AG04450 (cell line): ENCODE measurements at regions of chr2 and their contacts with region 1.

Region 1: GRCh38 chr2:98412751-98413458 is 31.8 kb upstream of the INPP4A start:
- DNase-seq: peak; percentile 8
- H3K4me3 ChIP-seq: no peak overlapping the region
- H3K27ac ChIP-seq: no peak overlapping the region
- H3K27me3 ChIP-seq: peaks cover 3% of the 10 kb centered on the region
- CTCF ChIP-seq: peak; percentile 83

Region 2: DNA sequence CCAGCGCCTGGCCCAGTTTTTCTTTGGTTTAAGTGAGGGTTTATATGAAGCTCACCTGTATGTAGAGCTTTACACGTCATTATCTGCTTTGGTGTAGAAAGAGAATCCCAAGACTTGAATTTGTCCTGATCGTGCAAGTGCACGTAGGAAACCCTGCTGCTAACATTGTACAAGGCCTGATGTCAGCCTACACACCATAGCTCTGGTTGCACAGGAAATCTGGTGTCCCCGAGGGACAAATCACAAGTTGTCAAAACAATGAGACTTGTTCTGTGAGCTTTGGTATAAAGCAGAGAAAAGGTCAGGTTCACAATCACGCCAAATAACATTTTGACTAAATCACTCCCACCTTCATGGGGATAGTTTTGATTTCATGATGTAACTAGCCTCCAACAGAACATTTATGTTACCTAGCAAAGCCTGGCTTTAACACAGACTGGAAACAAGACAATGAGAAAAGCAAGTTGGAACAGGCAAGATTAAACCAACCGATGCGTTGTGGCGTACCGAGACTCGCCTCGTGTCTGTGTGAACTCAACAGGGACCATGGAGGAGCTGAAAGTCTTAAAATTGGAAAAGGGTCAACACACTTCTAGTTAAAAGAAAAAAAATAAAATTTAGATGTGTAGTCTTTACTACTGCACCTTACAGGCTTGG is 658.1 kb before region 1 on chr2:
- CTCF ChIA-PET with region 1: no interaction called
- POLR2A ChIA-PET with region 1: no interaction called
- DNase-seq: no peak
- H3K4me3 ChIP-seq: no peak overlapping the region
- H3K27ac ChIP-seq: no peak overlapping the region
- H3K27me3 ChIP-seq: no peaks in the 10 kb centered on the region
- CTCF ChIP-seq: no peak

Region 3: GRCh38 chr2:97900806-97901205 is 512.1 kb before region 1 on chr2:
- CTCF ChIA-PET with region 1: no interaction called
- POLR2A ChIA-PET with region 1: no interaction called
- DNase-seq: peak; percentile 1
- H3K4me3 ChIP-seq: no peak overlapping the region
- H3K27ac ChIP-seq: no peak overlapping the region
- H3K27me3 ChIP-seq: no peaks in the 10 kb centered on the region
- CTCF ChIP-seq: no peak

Region 4: GRCh38 chr2:98472132-98472650 is 59.3 kb after region 1 on chr2:
- CTCF ChIA-PET with region 1: no interaction called
- POLR2A ChIA-PET with region 1: no interaction called
- DNase-seq: no peak
- H3K4me3 ChIP-seq: no peak overlapping the region
- H3K27ac ChIP-seq: no peak overlapping the region
- H3K27me3 ChIP-seq: no peaks in the 10 kb centered on the region
- CTCF ChIP-seq: no peak

Region 5: DNA sequence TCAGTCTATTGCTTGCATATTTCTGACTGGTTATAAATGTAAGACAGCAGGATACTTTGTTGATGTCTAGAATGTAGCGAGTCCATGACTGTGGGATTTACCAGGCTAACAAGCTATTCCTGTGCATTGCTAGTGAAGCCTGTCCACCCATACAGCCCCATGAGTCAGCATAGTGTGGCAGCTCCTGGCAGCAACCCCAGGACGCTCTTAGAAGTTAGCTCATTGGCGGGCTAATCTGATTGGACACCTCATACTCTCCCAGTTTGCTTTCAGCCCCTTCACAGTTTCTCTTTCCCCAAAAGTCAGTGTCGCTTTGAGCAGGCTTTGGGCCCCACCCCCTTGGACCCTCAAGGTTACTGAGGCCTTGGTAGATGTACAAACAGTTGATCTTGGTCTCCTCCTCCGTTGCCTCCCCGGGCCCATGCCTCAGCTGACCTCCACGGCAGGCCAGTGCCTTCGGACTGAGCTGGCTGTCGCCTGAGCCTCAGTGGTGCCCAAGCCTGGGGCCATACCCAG is 147.4 kb after region 1 on chr2:
- CTCF ChIA-PET with region 1: interaction called, 14 read pairs
- POLR2A ChIA-PET with region 1: no interaction called
- DNase-seq: peak; percentile 85
- H3K4me3 ChIP-seq: peak overlapping the region; percentile 15
- H3K27ac ChIP-seq: peak overlapping the region; percentile 91
- H3K27me3 ChIP-seq: no peaks in the 10 kb centered on the region
- CTCF ChIP-seq: no peak

Region 6: GRCh38 chr2:98601532-98602132 is 188.7 kb after region 1 on chr2:
- CTCF ChIA-PET with region 1: interaction called, 13 read pairs
- POLR2A ChIA-PET with region 1: no interaction called
- DNase-seq: no peak
- H3K4me3 ChIP-seq: no peak overlapping the region
- H3K27ac ChIP-seq: no peak overlapping the region
- H3K27me3 ChIP-seq: no peaks in the 10 kb centered on the region
- CTCF ChIP-seq: peak; percentile 79

Region 7: GRCh38 chr2:98607741-98608115 is 194.8 kb after region 1 on chr2:
- CTCF ChIA-PET with region 1: interaction called, 13 read pairs
- POLR2A ChIA-PET with region 1: no interaction called
- DNase-seq: no peak
- H3K4me3 ChIP-seq: peak overlapping the region; percentile 90
- H3K27ac ChIP-seq: peak overlapping the region; percentile 71
- H3K27me3 ChIP-seq: no peaks in the 10 kb centered on the region
- CTCF ChIP-seq: no peak